Thyroid gland (tissue), 4 donors: ENCODE measurements at regions of chr6 and their contacts with region 1.

Region 1: GRCh38 chr6:7243179-7243981 is 69.6 kb downstream of the SSR1 start:
- DNase-seq: peak; percentile 34 to 38
- H3K4me3 ChIP-seq: no peak overlapping the region
- H3K27ac ChIP-seq: peak overlapping the region; percentile 20 to 72 (median 71)
- H3K4me1 ChIP-seq: peaks cover 13 to 32% of the 10 kb centered on the region in 2 donors
- H3K27me3 ChIP-seq: no peaks in the 10 kb centered on the region
- CTCF ChIP-seq: peak; percentile 80 to 93 (median 87)
- POLR2A ChIP-seq: no peak

Region 2: GRCh38 chr6:6686748-6687601 is 556.4 kb before region 1 on chr6:
- intact Hi-C with region 1: loop called (anchors 10 kb)
- DNase-seq: peak; percentile 89 to 97
- H3K4me3 ChIP-seq: no peak overlapping the region
- H3K27ac ChIP-seq: peak overlapping the region; percentile 43 to 57 (median 46)
- H3K4me1 ChIP-seq: peaks cover 31 to 42% of the 10 kb centered on the region in 2 donors
- H3K27me3 ChIP-seq: no peaks in the 10 kb centered on the region
- CTCF ChIP-seq: no peak
- POLR2A ChIP-seq: peak in 1 of 2 donors; percentile 56

Region 3: DNA sequence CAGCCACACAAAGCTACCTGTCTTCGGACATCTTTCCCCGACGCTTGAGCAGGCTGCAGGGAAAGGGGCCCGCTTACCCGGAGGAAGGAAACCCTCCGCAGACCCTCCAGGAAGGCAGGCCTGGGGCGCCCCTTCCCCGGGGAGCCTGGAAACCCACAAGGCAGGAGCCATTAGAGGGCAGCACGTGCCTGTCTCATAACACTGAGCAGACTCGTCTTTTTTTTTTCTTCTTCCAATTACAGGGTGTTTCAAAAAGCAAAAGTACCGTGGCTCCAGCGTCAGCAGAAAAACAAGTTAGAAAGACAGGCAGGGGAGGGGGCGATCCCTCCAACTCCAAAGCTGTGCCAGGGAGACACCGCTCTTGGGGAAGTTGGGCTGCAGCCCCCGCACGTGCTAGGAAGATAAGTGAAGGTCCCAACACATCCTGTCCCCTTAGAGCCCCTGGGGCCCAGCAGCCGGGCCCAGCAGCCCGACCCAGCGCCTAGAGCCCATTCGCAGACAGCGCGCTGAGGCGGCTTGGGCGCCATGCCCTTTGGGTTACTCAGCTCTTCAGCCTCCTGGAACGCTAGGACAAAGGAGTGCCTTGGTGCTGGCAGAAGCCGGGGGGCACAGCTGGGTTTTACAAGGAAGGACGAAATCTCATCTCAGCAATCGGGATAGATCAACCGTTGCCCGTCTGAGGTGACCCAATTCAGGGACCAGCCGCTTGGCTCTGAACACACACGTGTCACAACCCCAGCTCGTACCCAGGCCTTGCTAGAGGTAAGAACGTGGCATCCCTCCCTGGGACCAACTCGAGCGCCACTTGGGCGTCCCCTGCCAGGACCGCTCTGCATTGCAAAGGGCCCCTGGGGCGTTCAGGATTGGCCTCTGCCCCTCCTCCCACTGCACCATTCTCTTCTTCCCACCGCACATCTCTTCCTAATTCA is 518.6 kb before region 1 on chr6:
- intact Hi-C with region 1: loop called (anchors 10 kb)
- DNase-seq: peak; percentile 83
- H3K4me3 ChIP-seq: peak overlapping the region in 1 of 3 donors; percentile 25
- H3K27ac ChIP-seq: peak overlapping the region; percentile 94 to 98 (median 96)
- H3K4me1 ChIP-seq: peaks cover 47 to 52% of the 10 kb centered on the region in 2 donors
- H3K27me3 ChIP-seq: no peaks in the 10 kb centered on the region
- CTCF ChIP-seq: peak; percentile 16 to 88 (median 58)
- POLR2A ChIP-seq: peak in 1 of 2 donors; percentile 47